Heart left ventricle (tissue), 16 donors: ENCODE measurements at regions of chr11 and their contacts with region 1.

Region 1: DNA sequence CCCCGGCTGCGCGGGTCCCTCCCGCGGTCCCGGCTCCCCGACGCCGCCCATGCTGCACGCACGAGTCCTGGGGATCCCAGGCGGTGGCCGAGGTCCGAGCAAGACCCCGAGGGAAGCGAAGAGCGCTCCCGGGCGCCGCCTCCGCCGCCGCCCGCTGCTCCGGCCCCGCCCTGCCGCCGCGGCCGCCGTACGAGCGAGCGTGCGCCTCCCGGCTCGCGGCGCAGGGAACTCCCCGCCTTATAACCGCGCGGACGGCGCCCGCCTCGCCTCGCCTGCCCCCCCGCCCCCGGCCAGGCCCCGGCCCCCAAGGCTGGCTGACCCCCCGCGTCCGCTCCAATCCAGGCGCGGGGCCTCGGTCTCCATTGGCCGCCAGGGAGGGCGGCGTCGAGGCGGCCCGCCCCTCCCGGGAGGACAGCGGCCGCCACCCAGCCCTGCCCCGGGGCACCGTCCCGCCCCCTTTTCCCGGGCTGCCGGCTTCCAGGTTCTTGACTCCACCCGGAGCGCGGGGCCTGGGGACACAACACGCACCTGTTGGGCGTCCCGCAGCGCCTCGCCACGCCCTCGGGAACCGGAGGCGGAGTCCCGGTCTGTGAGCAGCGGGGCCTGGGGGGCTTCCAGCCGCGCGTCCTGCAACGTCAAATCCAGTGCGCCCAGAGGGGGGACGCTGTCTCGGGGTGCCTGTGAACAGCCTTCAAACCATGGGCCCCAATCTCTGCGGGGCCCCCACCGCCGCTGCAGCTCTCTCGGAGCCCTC is at the start of gene FADS3:
- DNase-seq: peak; percentile 91 to 95 (median 93)
- ATAC-seq: peak; percentile 76 to 91 (median 86)
- H3K4me3 ChIP-seq: peak within 1 kb of the TSS; percentile 67 to 98 (median 94)
- H3K27ac ChIP-seq: peak within 1 kb of the TSS; percentile 68 to 97 (median 93)
- H3K4me1 ChIP-seq: peaks cover 15 to 55% (median 41%) of the 10 kb centered on the region in 12 donors
- H3K27me3 ChIP-seq: no peaks in the 10 kb centered on the region
- CTCF ChIP-seq: peak in 1 of 12 donors; percentile 4
- POLR2A ChIP-seq: peak in 1 of 2 donors; percentile 86
- total RNA-seq, gene FADS3: 53.2 to 147 (median 79.6) TPM

Region 2: DNA sequence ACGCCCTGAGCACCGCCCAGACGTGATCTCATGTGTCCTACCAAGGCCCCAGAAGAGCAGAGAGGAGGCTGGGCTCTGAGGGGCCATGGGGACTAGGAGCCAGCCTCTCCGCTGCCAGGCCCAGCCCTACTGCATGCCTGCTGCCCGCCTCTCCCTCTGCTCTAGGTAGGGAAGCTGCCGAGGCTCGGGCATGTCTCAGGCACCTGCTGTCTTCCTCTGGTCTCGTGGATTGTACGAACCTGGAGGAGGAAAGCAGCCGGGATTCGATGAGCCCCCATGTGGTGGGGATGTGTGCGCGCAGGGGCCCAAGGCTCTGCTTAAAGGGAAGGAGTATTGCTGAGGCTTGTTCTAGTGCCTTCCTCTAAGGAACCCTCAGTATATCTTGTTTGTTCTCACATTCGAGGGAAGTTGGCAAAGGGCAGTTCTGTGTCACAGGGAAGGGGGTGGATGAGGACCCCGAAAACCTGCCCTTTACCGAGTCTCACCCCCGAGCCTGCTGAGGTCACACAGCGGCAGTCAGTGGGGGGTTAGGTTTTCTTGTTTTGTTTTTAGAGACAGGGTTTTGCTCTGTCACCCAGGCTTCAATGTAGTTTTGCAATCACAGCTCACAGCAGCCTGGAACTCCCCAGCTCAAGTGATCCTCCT is 190.1 kb before region 1 on chr11:
- intact Hi-C with region 1: no loop called
- DNase-seq: no peak
- ATAC-seq: peak in 2 of 4 donors; percentile 4 to 26
- H3K4me3 ChIP-seq: no peak overlapping the region
- H3K27ac ChIP-seq: peak overlapping the region in 7 of 12 donors; percentile 26 to 86 (median 57)
- H3K4me1 ChIP-seq: peaks cover 4 to 66% (median 49%) of the 10 kb centered on the region in 12 donors
- H3K27me3 ChIP-seq: no peaks in the 10 kb centered on the region
- CTCF ChIP-seq: peak in 6 of 12 donors; percentile 13 to 40 (median 29)
- POLR2A ChIP-seq: no peak

Region 3: GRCh38 chr11:61827571-61828378 is 63.7 kb before region 1 on chr11 and contains the start of gene FADS2:
- intact Hi-C with region 1: loop called in 1 of 10 experiments (anchors 1 kb)
- DNase-seq: peak; percentile 94 to 96 (median 95)
- ATAC-seq: peak; percentile 52 to 90 (median 88)
- H3K4me3 ChIP-seq: peak within 1 kb of the TSS; percentile 47 to 80 (median 66)
- H3K27ac ChIP-seq: peak within 1 kb of the TSS; percentile 40 to 96 (median 86)
- H3K4me1 ChIP-seq: peaks cover 0 to 52% (median 29%) of the 10 kb centered on the region in 12 donors
- H3K27me3 ChIP-seq: no peaks in the 10 kb centered on the region
- CTCF ChIP-seq: peak in 1 of 12 donors; percentile 10
- POLR2A ChIP-seq: peak in 1 of 2 donors; percentile 16
- total RNA-seq, gene FADS2: 2.6 to 38.2 (median 19.2) TPM

Region 4: GRCh38 chr11:61871158-61871597 is 20.3 kb before region 1 on chr11:
- intact Hi-C with region 1: loop called in 4 of 10 experiments (anchors 1 to 2 kb)
- DNase-seq: peak; percentile 80 to 92 (median 88)
- ATAC-seq: peak; percentile 79 to 90 (median 84)
- H3K4me3 ChIP-seq: peak overlapping the region in 7 of 12 donors; percentile 11 to 41 (median 20)
- H3K27ac ChIP-seq: peak overlapping the region in 9 of 12 donors; percentile 1 to 82 (median 56)
- H3K4me1 ChIP-seq: peaks cover 2 to 48% (median 20%) of the 10 kb centered on the region in 12 donors
- H3K27me3 ChIP-seq: no peaks in the 10 kb centered on the region
- CTCF ChIP-seq: peak; percentile 88 to 98 (median 94)
- POLR2A ChIP-seq: peak in 1 of 2 donors; percentile 13

Region 5: GRCh38 chr11:62033191-62034044 is 141.9 kb after region 1 on chr11:
- intact Hi-C with region 1: no loop called
- DNase-seq: no peak
- ATAC-seq: no peak
- H3K4me3 ChIP-seq: no peak overlapping the region
- H3K27ac ChIP-seq: peak overlapping the region in 1 of 12 donors; percentile 51
- H3K4me1 ChIP-seq: peaks cover 0 to 7% (median 0%) of the 10 kb centered on the region in 12 donors
- H3K27me3 ChIP-seq: no peaks in the 10 kb centered on the region
- CTCF ChIP-seq: no peak
- POLR2A ChIP-seq: no peak

Region 6: GRCh38 chr11:62069986-62070919 is 178.7 kb after region 1 on chr11:
- intact Hi-C with region 1: no loop called
- DNase-seq: no peak
- ATAC-seq: no peak
- H3K4me3 ChIP-seq: no peak overlapping the region
- H3K27ac ChIP-seq: no peak overlapping the region
- H3K4me1 ChIP-seq: peaks cover 0 to 4% (median 0%) of the 10 kb centered on the region in 12 donors
- H3K27me3 ChIP-seq: no peaks in the 10 kb centered on the region
- CTCF ChIP-seq: no peak
- POLR2A ChIP-seq: no peak